Naive thymus-derived CD4-positive, alpha-beta T cell (primary cell): ENCODE measurements at regions of chr10 and their contacts with region 1.

Region 1: DNA sequence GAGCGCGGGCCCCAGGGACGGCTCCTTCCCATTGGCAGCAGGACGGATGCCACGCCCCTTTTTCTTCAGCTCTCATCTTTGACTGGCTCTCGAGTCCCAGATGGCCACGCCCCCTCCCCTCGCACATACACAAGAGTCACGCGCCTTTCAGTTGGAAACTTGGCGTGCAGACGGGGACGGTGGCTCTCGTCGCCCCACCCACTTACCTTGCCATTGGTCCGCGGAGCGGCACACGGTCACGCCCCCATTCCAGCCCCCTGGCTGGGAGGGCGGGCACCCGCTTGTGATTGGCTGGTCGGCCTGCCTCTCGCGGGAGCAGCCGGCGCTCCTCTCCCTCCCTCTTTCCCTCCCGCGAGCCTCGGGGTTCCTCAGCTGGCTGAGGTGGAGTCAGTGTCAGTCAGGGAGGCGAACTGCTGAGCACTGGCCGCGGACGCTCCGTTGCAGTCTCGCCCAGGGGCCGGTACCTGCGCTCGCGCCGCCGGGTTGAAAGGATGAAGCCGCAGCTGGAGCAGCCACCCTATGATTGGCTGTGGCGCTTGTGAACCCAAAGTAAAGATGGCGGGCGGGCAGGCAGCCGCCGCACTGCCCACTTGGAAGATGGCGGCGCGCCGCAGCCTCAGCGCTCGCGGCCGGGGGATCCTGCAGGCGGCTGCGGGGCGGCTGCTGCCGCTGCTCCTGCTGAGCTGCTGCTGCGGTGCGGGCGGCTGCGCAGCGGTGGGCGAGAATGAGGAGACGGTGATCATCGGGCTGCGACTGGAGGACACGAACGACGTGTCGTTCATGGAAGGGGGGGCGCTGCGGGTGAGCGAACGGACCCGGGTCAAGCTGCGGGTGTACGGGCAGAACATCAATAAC is at the start of gene CNNM2:
- DNase-seq: peak; percentile 95 to 100 (median 99)
- ATAC-seq: peak; percentile 95
- H3K4me3 ChIP-seq: peak within 1 kb of the TSS; percentile 98
- H3K4me3 Mint-ChIP-seq: peak within 1 kb of the TSS; percentile 94 to 99 (median 96)
- H3K27ac ChIP-seq: peak within 1 kb of the TSS; percentile 83
- H3K27ac Mint-ChIP-seq: peak within 1 kb of the TSS; percentile 82 to 97 (median 94)
- H3K4me1 ChIP-seq: peaks cover 34 to 35% of the 10 kb centered on the region in 2 donors
- H3K4me1 Mint-ChIP-seq: peaks cover 41 to 68% (median 56%) of the 10 kb centered on the region in 7 donors
- H3K27me3 ChIP-seq: no peaks in the 10 kb centered on the region
- H3K27me3 Mint-ChIP-seq: peaks cover 0 to 14% (median 5%) of the 10 kb centered on the region in 5 donors
- total RNA-seq, gene CNNM2: 9.3 to 17.5 (median 12.0) TPM

Region 2: DNA sequence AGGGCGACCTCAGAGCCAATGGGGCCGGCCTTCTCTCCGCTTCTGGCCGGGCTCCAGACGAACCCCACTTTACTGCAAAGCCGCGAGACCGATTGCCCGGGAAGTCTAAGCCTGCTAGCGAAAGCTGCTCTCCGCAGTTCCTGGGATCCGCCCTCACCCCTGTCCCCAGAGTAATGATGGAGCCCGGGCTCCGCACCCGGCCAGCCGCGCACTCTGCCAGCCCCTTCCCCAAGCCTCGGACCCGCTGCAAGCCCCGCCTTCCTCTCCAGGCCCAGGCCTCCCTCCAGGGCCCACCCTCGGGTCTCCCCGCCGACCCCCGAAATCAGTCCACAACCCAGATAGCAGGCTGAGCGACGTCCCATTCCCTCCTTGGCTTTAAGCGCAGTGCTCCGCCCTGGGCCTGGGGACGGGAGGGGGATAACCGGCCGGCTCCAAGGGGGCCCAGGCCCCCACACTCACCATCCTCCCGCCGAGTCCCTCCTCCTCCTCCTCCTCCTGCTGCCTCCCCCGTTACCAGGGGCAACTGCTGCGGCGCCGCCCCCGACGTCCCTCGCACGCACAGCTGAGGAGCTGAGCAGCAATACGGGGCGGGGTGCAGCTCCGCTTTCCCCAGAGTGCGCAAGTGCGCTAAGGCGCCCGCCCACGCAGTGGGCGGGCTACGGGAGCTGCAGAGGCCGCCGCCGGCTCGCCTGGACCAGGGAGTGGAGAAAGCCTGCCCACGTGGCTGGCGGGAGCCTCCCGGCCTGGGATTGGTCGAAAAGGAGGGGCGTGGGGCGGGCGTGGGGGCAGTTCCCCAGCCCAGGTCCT is 204.2 kb before region 1 on chr10 and contains the start of gene ARL3:
- CTCF ChIA-PET with region 1: no interaction called
- POLR2A ChIA-PET with region 1: interaction called, 3 read pairs
- intact Hi-C with region 1: loop called (anchors 1 kb)
- DNase-seq: peak; percentile 75 to 95 (median 89)
- ATAC-seq: peak; percentile 96
- H3K4me3 ChIP-seq: peak within 1 kb of the TSS; percentile 98
- H3K4me3 Mint-ChIP-seq: peak within 1 kb of the TSS; percentile 86 to 98 (median 94)
- H3K27ac ChIP-seq: peak within 1 kb of the TSS; percentile 92
- H3K27ac Mint-ChIP-seq: peak within 1 kb of the TSS; percentile 66 to 95 (median 90)
- H3K4me1 ChIP-seq: peaks cover 4 to 18% of the 10 kb centered on the region in 2 donors
- H3K4me1 Mint-ChIP-seq: peaks cover 26 to 52% (median 43%) of the 10 kb centered on the region in 7 donors
- H3K27me3 ChIP-seq: no peaks in the 10 kb centered on the region
- H3K27me3 Mint-ChIP-seq: no peaks in the 10 kb centered on the region
- total RNA-seq, gene ARL3: 1.3 to 5.1 (median 2.9) TPM

Region 3: GRCh38 chr10:102853944-102854694 is 64.1 kb before region 1 on chr10 and contains the start of gene BORCS7:
- CTCF ChIA-PET with region 1: no interaction called
- POLR2A ChIA-PET with region 1: no interaction called
- intact Hi-C with region 1: loop called (anchors 1 kb)
- DNase-seq: peak; percentile 69 to 91 (median 88)
- ATAC-seq: peak; percentile 100
- H3K4me3 ChIP-seq: peak within 1 kb of the TSS; percentile 100
- H3K4me3 Mint-ChIP-seq: peak within 1 kb of the TSS; percentile 84 to 99 (median 91)
- H3K27ac ChIP-seq: peak within 1 kb of the TSS; percentile 95
- H3K27ac Mint-ChIP-seq: peak within 1 kb of the TSS; percentile 96 to 99 (median 99)
- H3K4me1 ChIP-seq: no peaks in the 10 kb centered on the region
- H3K4me1 Mint-ChIP-seq: peaks cover 7 to 25% (median 15%) of the 10 kb centered on the region in 7 donors
- H3K27me3 ChIP-seq: no peaks in the 10 kb centered on the region
- H3K27me3 Mint-ChIP-seq: no peaks in the 10 kb centered on the region
- total RNA-seq, gene BORCS7: 11.6 to 20.2 (median 13.3) TPM

Region 4: DNA sequence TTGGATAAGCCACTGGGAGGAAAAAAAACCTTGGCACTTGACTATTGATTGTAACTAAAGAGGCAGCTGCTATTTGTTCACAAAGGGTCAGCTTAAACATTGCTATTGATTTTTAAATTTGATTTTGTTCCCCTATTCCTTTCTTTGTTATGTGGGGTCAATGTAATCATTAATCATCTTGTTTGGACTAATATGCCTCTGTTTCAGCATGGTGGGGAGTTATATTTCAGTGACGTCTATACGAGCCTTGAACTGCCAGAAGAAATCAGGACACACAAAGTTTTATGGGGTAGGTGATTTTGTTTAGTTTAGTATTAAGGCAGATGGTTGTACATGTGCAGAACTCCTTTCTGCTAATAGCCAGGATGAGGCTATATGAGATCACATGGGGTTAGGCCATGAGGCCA is 41.4 kb before region 1 on chr10:
- CTCF ChIA-PET with region 1: no interaction called
- POLR2A ChIA-PET with region 1: no interaction called
- intact Hi-C with region 1: no loop called
- DNase-seq: no peak
- ATAC-seq: no peak
- H3K4me3 ChIP-seq: no peak overlapping the region
- H3K4me3 Mint-ChIP-seq: no peak overlapping the region
- H3K27ac ChIP-seq: no peak overlapping the region
- H3K27ac Mint-ChIP-seq: no peak overlapping the region
- H3K4me1 ChIP-seq: no peaks in the 10 kb centered on the region
- H3K4me1 Mint-ChIP-seq: no peaks in the 10 kb centered on the region
- H3K27me3 ChIP-seq: no peaks in the 10 kb centered on the region
- H3K27me3 Mint-ChIP-seq: peaks cover 0 to 7% (median 0%) of the 10 kb centered on the region in 5 donors

Region 5: DNA sequence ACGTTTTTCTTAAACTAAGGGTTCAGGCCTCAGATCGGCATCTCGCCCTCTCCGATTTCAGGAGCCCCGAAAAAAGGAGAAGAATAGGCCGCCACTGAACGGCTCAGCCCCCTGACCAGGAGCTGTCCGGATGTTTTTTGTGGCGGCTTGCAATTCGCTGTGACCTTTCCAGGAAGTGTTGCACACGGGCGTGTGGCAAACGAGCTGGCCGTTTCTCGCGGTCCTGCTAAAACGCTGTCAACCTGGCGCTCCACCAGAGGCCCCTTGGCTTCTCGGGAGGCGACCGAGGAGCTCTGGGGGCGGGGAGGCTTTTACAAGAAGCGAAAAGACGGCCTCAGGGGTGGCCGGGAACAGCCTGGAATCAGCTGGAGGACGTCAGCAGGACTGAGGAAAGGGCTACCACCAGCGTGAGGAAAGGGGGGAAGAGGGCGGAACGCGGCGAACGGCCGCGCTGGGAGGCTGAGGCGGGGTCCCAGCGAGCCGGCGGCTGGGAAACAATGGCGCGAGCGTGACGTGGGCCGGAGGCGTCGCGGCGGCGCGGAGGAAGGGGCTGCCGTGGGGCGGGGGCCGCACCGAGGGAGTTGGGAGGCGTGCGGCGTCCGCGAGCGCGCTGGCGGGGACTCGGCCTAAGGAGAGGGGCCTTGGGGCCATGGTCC is 274.4 kb after region 1 on chr10:
- CTCF ChIA-PET with region 1: interaction called, 4 read pairs
- POLR2A ChIA-PET with region 1: interaction called, 3 read pairs
- intact Hi-C with region 1: loop called (anchors 1 kb)
- DNase-seq: peak; percentile 36 to 76 (median 63)
- ATAC-seq: peak; percentile 60
- H3K4me3 ChIP-seq: peak overlapping the region; percentile 85
- H3K4me3 Mint-ChIP-seq: peak overlapping the region; percentile 91 to 100 (median 98)
- H3K27ac ChIP-seq: peak overlapping the region; percentile 97
- H3K27ac Mint-ChIP-seq: peak overlapping the region; percentile 81 to 100 (median 95)
- H3K4me1 ChIP-seq: peaks cover 6 to 21% of the 10 kb centered on the region in 2 donors
- H3K4me1 Mint-ChIP-seq: peaks cover 36 to 48% (median 44%) of the 10 kb centered on the region in 7 donors
- H3K27me3 ChIP-seq: no peaks in the 10 kb centered on the region
- H3K27me3 Mint-ChIP-seq: no peaks in the 10 kb centered on the region

Region 6: GRCh38 chr10:103350501-103351260 is 432.5 kb after region 1 on chr10 and contains the start of gene PCGF6:
- CTCF ChIA-PET with region 1: no interaction called
- POLR2A ChIA-PET with region 1: no interaction called
- intact Hi-C with region 1: loop called in 1 of 2 experiments (anchors 5 kb)
- DNase-seq: peak; percentile 42 to 85 (median 70)
- ATAC-seq: peak; percentile 88
- H3K4me3 ChIP-seq: peak within 1 kb of the TSS; percentile 79
- H3K4me3 Mint-ChIP-seq: peak within 1 kb of the TSS; percentile 83 to 95 (median 91)
- H3K27ac ChIP-seq: peak within 1 kb of the TSS; percentile 80
- H3K27ac Mint-ChIP-seq: peak within 1 kb of the TSS; percentile 69 to 94 (median 86)
- H3K4me1 ChIP-seq: peaks cover 6 to 11% of the 10 kb centered on the region in 2 donors
- H3K4me1 Mint-ChIP-seq: peaks cover 0 to 14% (median 9%) of the 10 kb centered on the region in 7 donors
- H3K27me3 ChIP-seq: no peaks in the 10 kb centered on the region
- H3K27me3 Mint-ChIP-seq: no peaks in the 10 kb centered on the region
- total RNA-seq, gene PCGF6: 4.3 to 12.0 (median 6.6) TPM

Region 7: GRCh38 chr10:103481974-103482531 is 563.9 kb after region 1 on chr10:
- CTCF ChIA-PET with region 1: no interaction called
- POLR2A ChIA-PET with region 1: no interaction called
- intact Hi-C with region 1: loop called in 1 of 2 experiments (anchors 1 kb)
- DNase-seq: peak in 7 of 9 donors; percentile 41 to 69 (median 57)
- ATAC-seq: peak; percentile 79
- H3K4me3 ChIP-seq: no peak overlapping the region
- H3K4me3 Mint-ChIP-seq: no peak overlapping the region
- H3K27ac ChIP-seq: no peak overlapping the region
- H3K27ac Mint-ChIP-seq: no peak overlapping the region
- H3K4me1 ChIP-seq: no peaks in the 10 kb centered on the region
- H3K4me1 Mint-ChIP-seq: peaks cover 0 to 27% (median 4%) of the 10 kb centered on the region in 7 donors
- H3K27me3 ChIP-seq: no peaks in the 10 kb centered on the region
- H3K27me3 Mint-ChIP-seq: peaks cover 0 to 6% (median 0%) of the 10 kb centered on the region in 5 donors